CD4-positive, alpha-beta memory T cell (primary cell): ENCODE measurements at regions of chr14 and their contacts with region 1.

Region 1: GRCh38 chr14:104399432-104400151 is 180.0 kb upstream of the C14orf180 start:
- DNase-seq: peak in 4 of 5 donors; percentile 47 to 57 (median 52)
- H3K4me3 ChIP-seq: no peak overlapping the region
- H3K4me3 Mint-ChIP-seq: peak overlapping the region in 6 of 8 donors; percentile 4 to 51 (median 29)
- H3K27ac ChIP-seq: no peak overlapping the region
- H3K27ac Mint-ChIP-seq: peak overlapping the region; percentile 77 to 92 (median 88)
- H3K4me1 ChIP-seq: peaks cover 42% of the 10 kb centered on the region
- H3K4me1 Mint-ChIP-seq: peaks cover 24 to 53% (median 37%) of the 10 kb centered on the region in 4 donors
- H3K27me3 ChIP-seq: no peaks in the 10 kb centered on the region
- H3K27me3 Mint-ChIP-seq: no peaks in the 10 kb centered on the region

Region 2: GRCh38 chr14:104137297-104138097 is 262.1 kb before region 1 on chr14:
- CTCF ChIA-PET with region 1: interaction called, 11 read pairs
- POLR2A ChIA-PET with region 1: interaction called, 6 read pairs
- intact Hi-C with region 1: no loop called
- DNase-seq: peak in 4 of 5 donors; percentile 43 to 60 (median 52)
- H3K4me3 ChIP-seq: peak overlapping the region in 1 of 2 donors; percentile 24
- H3K4me3 Mint-ChIP-seq: peak overlapping the region; percentile 36 to 70 (median 64)
- H3K27ac ChIP-seq: no peak overlapping the region
- H3K27ac Mint-ChIP-seq: peak overlapping the region in 2 of 7 donors; percentile 15 to 57
- H3K4me1 ChIP-seq: peaks cover 15% of the 10 kb centered on the region
- H3K4me1 Mint-ChIP-seq: peaks cover 2 to 9% (median 5%) of the 10 kb centered on the region in 4 donors
- H3K27me3 ChIP-seq: peaks cover 13% of the 10 kb centered on the region
- H3K27me3 Mint-ChIP-seq: peaks cover 23 to 25% of the 10 kb centered on the region in 2 donors